ENCODE measurements at regions of chr4 and their contacts with region 1.

Region 1: GRCh38 chr4:73109493-73109892 is 40.0 kb upstream of the COX18 start:
- DNase-seq: no peak
- ATAC-seq: no peak
- H3K4me3 ChIP-seq: no peak overlapping the region
- H3K4me3 Mint-ChIP-seq: no peak overlapping the region
- H3K27ac ChIP-seq: no peak overlapping the region
- H3K27ac Mint-ChIP-seq: no peak overlapping the region
- H3K4me1 ChIP-seq: no peaks in the 10 kb centered on the region
- H3K4me1 Mint-ChIP-seq: no peaks in the 10 kb centered on the region
- H3K27me3 ChIP-seq: no peaks in the 10 kb centered on the region
- H3K27me3 Mint-ChIP-seq: no peaks in the 10 kb centered on the region
- CTCF ChIP-seq: no peak

Region 2: GRCh38 chr4:73090738-73091137 is 18.8 kb before region 1 on chr4:
- CTCF ChIA-PET with region 1: no interaction called
- POLR2A ChIA-PET with region 1: no interaction called
- intact Hi-C with region 1: no loop called
- DNase-seq: no peak
- ATAC-seq: no peak
- H3K4me3 ChIP-seq: no peak overlapping the region
- H3K4me3 Mint-ChIP-seq: no peak overlapping the region
- H3K27ac ChIP-seq: no peak overlapping the region
- H3K27ac Mint-ChIP-seq: no peak overlapping the region
- H3K4me1 ChIP-seq: peaks cover 8% of the 10 kb centered on the region
- H3K4me1 Mint-ChIP-seq: peaks cover 19% of the 10 kb centered on the region
- H3K27me3 ChIP-seq: no peaks in the 10 kb centered on the region
- H3K27me3 Mint-ChIP-seq: no peaks in the 10 kb centered on the region
- CTCF ChIP-seq: no peak

Region 3: GRCh38 chr4:73127839-73128453 is 18.5 kb after region 1 on chr4:
- CTCF ChIA-PET with region 1: interaction called, 6 read pairs
- POLR2A ChIA-PET with region 1: interaction called, 3 read pairs
- intact Hi-C with region 1: loop called in 1 of 2 experiments (anchors 1 kb)
- DNase-seq: peak in 5 of 14 experiments; percentile 9 to 49 (median 13)
- ATAC-seq: peak; percentile 95
- H3K4me3 ChIP-seq: no peak overlapping the region
- H3K4me3 Mint-ChIP-seq: no peak overlapping the region
- H3K27ac ChIP-seq: no peak overlapping the region
- H3K27ac Mint-ChIP-seq: peak overlapping the region; percentile 27
- H3K4me1 ChIP-seq: no peaks in the 10 kb centered on the region
- H3K4me1 Mint-ChIP-seq: peaks cover 10% of the 10 kb centered on the region
- H3K27me3 ChIP-seq: no peaks in the 10 kb centered on the region
- H3K27me3 Mint-ChIP-seq: no peaks in the 10 kb centered on the region
- CTCF ChIP-seq: peak; percentile 11

Region 4: GRCh38 chr4:73187325-73187724 is 77.8 kb after region 1 on chr4:
- CTCF ChIA-PET with region 1: no interaction called
- POLR2A ChIA-PET with region 1: no interaction called
- intact Hi-C with region 1: no loop called
- DNase-seq: no peak
- ATAC-seq: no peak
- H3K4me3 ChIP-seq: no peak overlapping the region
- H3K4me3 Mint-ChIP-seq: no peak overlapping the region
- H3K27ac ChIP-seq: no peak overlapping the region
- H3K27ac Mint-ChIP-seq: no peak overlapping the region
- H3K4me1 ChIP-seq: no peaks in the 10 kb centered on the region
- H3K4me1 Mint-ChIP-seq: peaks cover 41% of the 10 kb centered on the region
- H3K27me3 ChIP-seq: no peaks in the 10 kb centered on the region
- H3K27me3 Mint-ChIP-seq: no peaks in the 10 kb centered on the region
- CTCF ChIP-seq: no peak

Measured in CD4-positive, alpha-beta T cell (primary cell).